ENCODE measurements at regions of chr13 and their contacts with region 1.

Region 1: DNA sequence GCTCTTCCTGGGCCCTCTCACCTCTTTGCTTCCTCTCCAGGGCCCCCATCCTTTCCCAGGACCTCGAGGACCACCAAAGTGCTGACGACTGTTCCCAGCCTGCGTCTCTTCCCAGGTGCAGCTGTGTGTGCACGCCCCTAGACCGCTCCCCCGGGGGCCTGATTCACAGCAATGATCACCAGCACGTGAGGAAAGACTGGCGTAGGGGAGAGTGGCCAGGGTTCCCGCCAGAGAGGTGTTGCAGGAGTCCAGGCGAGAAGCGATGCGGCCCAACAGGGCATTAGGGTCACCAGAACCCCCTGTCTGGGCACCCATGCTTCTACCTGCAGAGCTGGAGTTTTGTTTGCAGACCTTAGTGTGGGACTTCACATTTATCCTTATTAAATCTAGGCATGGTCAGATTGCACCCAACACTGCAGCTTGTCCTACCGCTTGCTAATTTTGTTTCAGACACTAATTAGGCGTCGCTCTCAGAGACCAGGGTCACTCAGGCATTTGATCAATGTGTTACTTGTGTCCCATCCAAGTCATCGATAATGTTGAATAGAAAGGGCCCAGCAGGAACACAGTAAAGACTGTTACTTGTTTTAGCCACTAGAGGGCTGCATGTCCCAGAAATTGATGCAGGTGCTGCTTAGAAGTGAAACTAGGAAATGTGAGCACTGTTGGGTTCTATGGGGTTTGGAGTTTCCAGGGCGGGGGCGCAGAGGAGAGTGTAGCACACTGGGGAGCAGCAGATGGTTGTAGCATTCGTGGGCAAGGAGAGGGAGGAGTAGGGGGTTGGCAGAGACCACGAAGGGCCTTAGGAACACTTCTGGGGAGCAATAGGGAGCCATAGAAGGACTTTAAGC is 53.2 kb downstream of the CDADC1 start:
- DNase-seq: peak in 7 of 10 donors; percentile 37 to 63 (median 59)
- H3K4me3 ChIP-seq: peak overlapping the region in 53 of 59 donors; percentile 3 to 59 (median 41)
- H3K27ac ChIP-seq: peak overlapping the region in 50 of 59 donors; percentile 7 to 95 (median 78)
- H3K27me3 ChIP-seq: no peaks in the 10 kb centered on the region
- CTCF ChIP-seq: peak; percentile 71 to 97 (median 92)

Region 2: DNA sequence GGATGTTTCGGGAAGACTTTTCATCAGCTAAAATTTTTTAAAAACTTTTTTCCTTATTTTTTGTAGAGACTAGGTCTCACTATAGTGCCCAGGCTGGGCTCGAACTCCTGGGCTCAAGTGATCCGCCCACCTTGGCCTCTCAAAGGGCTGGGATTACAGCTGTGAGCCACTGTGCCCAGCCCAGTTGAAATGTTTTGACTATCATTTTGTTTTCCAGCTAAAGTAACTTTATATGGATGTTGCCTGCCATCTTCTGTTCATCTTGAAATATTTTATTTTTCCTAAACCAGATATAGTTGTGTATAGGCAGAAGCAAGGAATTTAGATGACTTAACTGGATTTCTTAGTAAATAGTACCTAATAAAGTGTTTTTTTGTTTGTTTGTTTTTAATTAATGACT is 135.9 kb after region 1 on chr13:
- intact Hi-C with region 1: loop called (anchors 2 kb)
- DNase-seq: peak in 4 of 10 donors; percentile 11 to 51 (median 38)
- H3K4me3 ChIP-seq: no peak overlapping the region
- H3K27ac ChIP-seq: peak overlapping the region in 21 of 59 donors; percentile 7 to 58 (median 32)
- H3K27me3 ChIP-seq: no peaks in the 10 kb centered on the region
- CTCF ChIP-seq: peak; percentile 13 to 73 (median 48)

Region 3: DNA sequence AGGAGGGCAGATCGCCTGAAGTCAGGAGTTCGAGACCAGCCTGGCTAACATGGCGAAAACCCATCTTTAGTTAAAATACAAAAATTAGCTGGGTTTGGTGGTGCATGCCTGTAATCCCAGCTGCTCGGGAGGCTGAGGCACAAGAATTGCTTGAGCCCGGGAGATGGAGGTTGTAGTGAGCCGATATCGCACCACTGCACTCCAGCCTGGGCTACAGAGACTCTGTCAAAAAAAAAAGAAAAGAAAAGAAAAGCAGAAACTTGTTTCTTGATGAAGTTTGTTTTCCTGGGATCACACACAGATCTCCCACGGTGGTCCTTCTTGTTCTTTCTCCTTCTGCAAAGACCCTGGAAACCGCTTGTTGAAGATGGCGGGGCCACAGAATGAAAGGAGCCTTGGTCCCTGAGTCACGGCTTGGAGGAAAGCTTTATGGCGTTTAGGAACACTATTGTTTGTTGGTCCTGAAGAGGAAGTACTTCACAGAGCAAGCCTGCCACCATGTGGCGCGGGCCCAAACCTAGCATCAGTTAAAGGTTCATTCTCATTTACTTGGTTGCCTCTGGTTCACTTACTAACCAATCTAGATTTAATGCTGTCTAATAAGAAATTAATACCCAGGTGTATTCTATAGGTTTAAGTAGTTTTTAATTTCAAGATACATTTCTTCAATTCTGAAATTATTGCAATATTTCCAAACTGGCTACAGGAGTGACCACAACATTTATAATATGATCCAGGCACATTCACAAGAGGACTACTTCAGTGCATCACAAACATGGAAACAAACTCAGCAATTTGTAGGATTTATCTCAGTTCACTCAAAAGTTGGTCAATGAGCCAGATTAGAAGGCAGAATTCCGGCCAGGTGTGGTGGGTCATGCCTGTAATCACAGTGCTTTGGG is 306.0 kb after region 1 on chr13:
- intact Hi-C with region 1: loop called (anchors 2 to 5 kb)
- DNase-seq: peak; percentile 79 to 96 (median 91)
- H3K4me3 ChIP-seq: peak overlapping the region in 58 of 59 donors; percentile 15 to 66 (median 48)
- H3K27ac ChIP-seq: peak overlapping the region in 29 of 59 donors; percentile 4 to 80 (median 46)
- H3K27me3 ChIP-seq: no peaks in the 10 kb centered on the region
- CTCF ChIP-seq: peak; percentile 65 to 96 (median 86)

Measured in dorsolateral prefrontal cortex (tissue), 120 donors.